ENCODE measurements at regions of chr21 and their contacts with region 1.

Region 1: GRCh38 chr21:14864211-14865021 is 200.4 kb downstream of the NRIP1 start:
- DNase-seq: no peak
- ATAC-seq: peak; percentile 95
- H3K4me3 ChIP-seq: no peak overlapping the region
- H3K27ac ChIP-seq: peak overlapping the region; percentile 40
- H3K4me1 ChIP-seq: peaks cover 13% of the 10 kb centered on the region
- H3K27me3 ChIP-seq: no peaks in the 10 kb centered on the region
- CTCF ChIP-seq: peak; percentile 87 to 89 (median 87)
- EP300 ChIP-seq: peak in 1 of 2 experiments; percentile 44; a peak in 1 of 4 replicates
- POLR2A ChIP-seq: no peak
- RAD21 ChIP-seq: peak; percentile 95

Region 2: DNA sequence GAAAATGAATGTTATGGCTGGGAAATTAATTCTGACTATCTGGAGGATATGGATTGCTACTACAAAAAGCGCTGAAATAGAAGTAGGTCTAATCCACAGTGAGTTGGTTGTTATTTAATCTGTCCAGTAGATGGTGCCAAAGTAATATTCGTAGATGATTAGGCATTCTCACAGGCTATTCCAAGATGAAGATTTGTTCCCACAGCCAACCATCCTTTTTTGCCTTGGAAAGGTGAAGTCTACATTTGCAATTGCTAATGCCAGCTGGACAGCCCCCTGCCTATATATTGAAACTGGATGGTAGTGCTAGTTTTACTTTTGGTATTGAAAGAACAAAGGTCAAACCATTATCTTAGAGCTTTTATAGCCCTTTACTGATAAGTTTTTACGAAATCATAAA is 604.7 kb before region 1 on chr21:
- CTCF ChIA-PET with region 1: interaction called, 7 read pairs
- POLR2A ChIA-PET with region 1: no interaction called
- RAD21 ChIA-PET with region 1: no interaction called
- SMC1A ChIA-PET with region 1: interaction called, 3 read pairs
- in situ Hi-C with region 1: no loop called
- intact Hi-C with region 1: loop called (anchors 10 kb)
- DNase-seq: no peak
- ATAC-seq: peak; percentile 76
- H3K4me3 ChIP-seq: no peak overlapping the region
- H3K27ac ChIP-seq: no peak overlapping the region
- H3K4me1 ChIP-seq: no peaks in the 10 kb centered on the region
- H3K27me3 ChIP-seq: no peaks in the 10 kb centered on the region; a peak in 1 of 4 replicates
- CTCF ChIP-seq: peak; percentile 35 to 56 (median 50); a peak in 4 of 6 replicates
- EP300 ChIP-seq: no peak
- POLR2A ChIP-seq: no peak
- RAD21 ChIP-seq: peak; percentile 69

Region 3: GRCh38 chr21:14581902-14582457 is 282.4 kb before region 1 on chr21:
- CTCF ChIA-PET with region 1: no interaction called
- POLR2A ChIA-PET with region 1: interaction called, 11 read pairs
- RAD21 ChIA-PET with region 1: no interaction called
- SMC1A ChIA-PET with region 1: no interaction called
- in situ Hi-C with region 1: no loop called
- intact Hi-C with region 1: no loop called
- DNase-seq: no peak
- ATAC-seq: no peak
- H3K4me3 ChIP-seq: no peak overlapping the region
- H3K27ac ChIP-seq: no peak overlapping the region
- H3K4me1 ChIP-seq: no peaks in the 10 kb centered on the region
- H3K27me3 ChIP-seq: no peaks in the 10 kb centered on the region
- CTCF ChIP-seq: no peak
- EP300 ChIP-seq: no peak
- POLR2A ChIP-seq: no peak
- RAD21 ChIP-seq: no peak

Region 4: DNA sequence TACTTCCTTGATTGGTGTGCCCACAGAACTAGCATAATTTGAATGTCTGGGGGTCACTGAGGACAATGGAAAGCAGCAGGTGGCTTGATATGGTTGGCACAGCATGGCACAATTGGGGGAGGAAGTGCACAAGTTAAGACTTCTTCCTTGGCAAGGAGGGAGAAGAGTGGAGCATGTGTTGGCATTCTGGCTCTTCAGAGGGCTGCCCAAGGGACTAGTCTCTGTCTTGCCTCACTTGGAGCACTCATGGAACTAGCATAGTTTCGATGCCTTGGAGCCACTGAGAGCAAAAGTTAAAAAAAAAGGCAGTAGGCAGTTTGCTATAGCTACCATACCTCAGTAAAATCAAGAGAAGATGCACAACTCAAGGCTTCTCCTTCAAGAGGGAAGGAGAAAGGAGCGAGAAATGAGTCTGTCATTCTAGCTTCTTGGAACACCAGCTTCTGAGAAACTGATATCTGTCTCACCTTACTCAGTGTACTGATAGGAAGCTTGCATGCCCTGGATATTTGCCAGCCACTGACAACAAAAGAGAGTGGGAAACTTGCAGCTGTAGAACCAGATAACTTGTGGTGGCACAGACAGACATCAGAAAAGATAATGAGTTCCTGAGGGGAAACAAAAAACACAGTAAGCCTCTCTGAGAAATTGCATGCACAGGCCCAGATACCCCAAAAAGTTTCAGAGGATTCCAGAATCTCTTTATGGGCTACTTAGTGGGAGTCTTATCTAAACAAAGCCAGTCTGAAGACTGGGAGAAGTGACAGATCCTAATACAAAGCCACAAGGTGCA is 110.8 kb before region 1 on chr21:
- CTCF ChIA-PET with region 1: no interaction called
- POLR2A ChIA-PET with region 1: no interaction called
- RAD21 ChIA-PET with region 1: no interaction called
- SMC1A ChIA-PET with region 1: no interaction called
- in situ Hi-C with region 1: no loop called
- intact Hi-C with region 1: no loop called
- DNase-seq: no peak
- ATAC-seq: no peak
- H3K4me3 ChIP-seq: no peak overlapping the region
- H3K27ac ChIP-seq: no peak overlapping the region
- H3K4me1 ChIP-seq: 0 out of 2 replicates have a peak, but pooled peaks cover 3% of the 10 kb centered on the region
- H3K27me3 ChIP-seq: no peaks in the 10 kb centered on the region
- CTCF ChIP-seq: no peak
- EP300 ChIP-seq: no peak
- POLR2A ChIP-seq: no peak
- RAD21 ChIP-seq: no peak

Region 5: GRCh38 chr21:14773777-14774345 is 90.6 kb before region 1 on chr21:
- CTCF ChIA-PET with region 1: interaction called, 13 read pairs
- POLR2A ChIA-PET with region 1: no interaction called
- RAD21 ChIA-PET with region 1: no interaction called
- SMC1A ChIA-PET with region 1: interaction called, 4 read pairs
- in situ Hi-C with region 1: no loop called
- intact Hi-C with region 1: no loop called
- DNase-seq: no peak
- ATAC-seq: peak; percentile 78
- H3K4me3 ChIP-seq: no peak overlapping the region
- H3K27ac ChIP-seq: no peak overlapping the region
- H3K4me1 ChIP-seq: no peaks in the 10 kb centered on the region
- H3K27me3 ChIP-seq: no peaks in the 10 kb centered on the region
- CTCF ChIP-seq: peak; percentile 69 to 73 (median 72); a peak in 5 of 6 replicates
- EP300 ChIP-seq: no peak
- POLR2A ChIP-seq: no peak
- RAD21 ChIP-seq: peak; percentile 87

Region 6: GRCh38 chr21:14797543-14797942 is 66.9 kb before region 1 on chr21:
- CTCF ChIA-PET with region 1: no interaction called
- POLR2A ChIA-PET with region 1: no interaction called
- RAD21 ChIA-PET with region 1: no interaction called
- SMC1A ChIA-PET with region 1: no interaction called
- in situ Hi-C with region 1: no loop called
- intact Hi-C with region 1: no loop called
- DNase-seq: no peak
- ATAC-seq: no peak
- H3K4me3 ChIP-seq: no peak overlapping the region
- H3K27ac ChIP-seq: no peak overlapping the region
- H3K4me1 ChIP-seq: no peaks in the 10 kb centered on the region
- H3K27me3 ChIP-seq: no peaks in the 10 kb centered on the region
- CTCF ChIP-seq: no peak
- EP300 ChIP-seq: no peak
- POLR2A ChIP-seq: no peak
- RAD21 ChIP-seq: no peak

Region 7: GRCh38 chr21:14883351-14883750 is 18.9 kb after region 1 on chr21:
- CTCF ChIA-PET with region 1: interaction called, 15 read pairs
- POLR2A ChIA-PET with region 1: no interaction called
- RAD21 ChIA-PET with region 1: interaction called, 7 read pairs
- SMC1A ChIA-PET with region 1: interaction called, 13 read pairs
- in situ Hi-C with region 1: no loop called
- intact Hi-C with region 1: no loop called
- DNase-seq: no peak
- ATAC-seq: no peak
- H3K4me3 ChIP-seq: no peak overlapping the region
- H3K27ac ChIP-seq: no peak overlapping the region
- H3K4me1 ChIP-seq: peaks cover 9% of the 10 kb centered on the region
- H3K27me3 ChIP-seq: no peaks in the 10 kb centered on the region
- CTCF ChIP-seq: no peak
- EP300 ChIP-seq: no peak
- POLR2A ChIP-seq: no peak
- RAD21 ChIP-seq: no peak

Region 8: GRCh38 chr21:15355066-15355465 is 490.6 kb after region 1 on chr21:
- CTCF ChIA-PET with region 1: no interaction called
- POLR2A ChIA-PET with region 1: no interaction called
- RAD21 ChIA-PET with region 1: no interaction called
- SMC1A ChIA-PET with region 1: no interaction called
- in situ Hi-C with region 1: no loop called
- intact Hi-C with region 1: no loop called
- DNase-seq: no peak
- ATAC-seq: no peak
- H3K4me3 ChIP-seq: no peak overlapping the region
- H3K27ac ChIP-seq: no peak overlapping the region
- H3K4me1 ChIP-seq: no peaks in the 10 kb centered on the region
- H3K27me3 ChIP-seq: no peaks in the 10 kb centered on the region
- CTCF ChIP-seq: no peak
- EP300 ChIP-seq: no peak
- POLR2A ChIP-seq: no peak
- RAD21 ChIP-seq: no peak

Region 9: GRCh38 chr21:15483138-15483780 is 618.8 kb after region 1 on chr21:
- CTCF ChIA-PET with region 1: interaction called, 66 read pairs
- POLR2A ChIA-PET with region 1: no interaction called
- RAD21 ChIA-PET with region 1: interaction called, 22 read pairs
- SMC1A ChIA-PET with region 1: interaction called, 36 read pairs
- in situ Hi-C with region 1: loop called (anchors 25 kb)
- intact Hi-C with region 1: loop called (anchors 1 kb)
- DNase-seq: peak; percentile 45
- ATAC-seq: peak; percentile 100
- H3K4me3 ChIP-seq: no peak overlapping the region
- H3K27ac ChIP-seq: no peak overlapping the region
- H3K4me1 ChIP-seq: no peaks in the 10 kb centered on the region
- H3K27me3 ChIP-seq: no peaks in the 10 kb centered on the region
- CTCF ChIP-seq: peak; percentile 88 to 95 (median 89)
- EP300 ChIP-seq: no peak
- POLR2A ChIP-seq: no peak
- RAD21 ChIP-seq: peak; percentile 96

Measured in GM12878 (cell line).